Sciatic nerve (tissue), 2 donors: ENCODE measurements at regions of chr18 and their contacts with region 1.

Region 1: DNA sequence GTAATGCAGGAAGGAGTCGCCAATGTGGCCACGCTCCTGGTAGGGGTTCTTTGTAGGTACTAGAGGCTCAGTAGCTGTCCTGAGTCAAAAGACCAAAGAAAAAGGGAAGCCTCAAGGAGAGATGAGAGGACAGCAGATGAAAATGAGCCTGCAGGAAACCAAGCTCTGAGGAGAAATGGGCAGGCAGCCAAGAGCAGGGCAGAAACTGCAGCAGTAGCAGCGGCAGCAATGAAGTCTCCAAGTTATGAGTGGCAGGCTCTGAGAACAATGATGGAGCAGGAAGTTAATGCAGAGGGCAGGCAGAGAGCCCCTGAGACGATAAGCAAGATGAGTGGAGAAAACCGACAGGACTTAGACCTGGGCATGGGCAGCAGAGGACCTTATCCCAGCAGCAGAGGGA is 48.2 kb upstream of the TMEM200C start:
- DNase-seq: no peak
- ATAC-seq: no peak

Region 2: GRCh38 chr18:5895885-5896740 is 47.4 kb before region 1 on chr18:
- intact Hi-C with region 1: no loop called
- DNase-seq: peak; percentile 60
- ATAC-seq: peak; percentile 65

Region 3: DNA sequence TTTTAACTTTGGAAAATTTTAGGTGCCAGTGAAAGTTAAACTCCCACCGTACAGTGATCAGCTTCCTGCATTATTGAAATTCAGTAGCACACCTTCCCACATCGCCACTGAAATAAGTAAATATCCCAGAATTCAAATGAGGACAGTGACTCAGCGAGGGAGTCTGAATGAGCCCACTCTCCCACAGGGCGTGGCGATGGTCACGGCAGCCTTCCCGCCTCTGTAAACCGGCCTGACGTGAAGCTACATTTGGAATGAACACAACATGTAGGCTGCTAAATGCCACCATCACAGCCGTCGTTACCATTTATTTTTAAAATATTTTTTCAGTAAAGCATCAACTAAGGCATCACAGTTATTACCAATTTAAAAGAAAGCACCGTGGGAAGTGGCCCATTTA is 250.6 kb after region 1 on chr18:
- intact Hi-C with region 1: loop called (anchors 5 kb)
- DNase-seq: no peak
- ATAC-seq: no peak